BJ (cell line): ENCODE measurements at regions of chr1 and their contacts with region 1.

Region 1: DNA sequence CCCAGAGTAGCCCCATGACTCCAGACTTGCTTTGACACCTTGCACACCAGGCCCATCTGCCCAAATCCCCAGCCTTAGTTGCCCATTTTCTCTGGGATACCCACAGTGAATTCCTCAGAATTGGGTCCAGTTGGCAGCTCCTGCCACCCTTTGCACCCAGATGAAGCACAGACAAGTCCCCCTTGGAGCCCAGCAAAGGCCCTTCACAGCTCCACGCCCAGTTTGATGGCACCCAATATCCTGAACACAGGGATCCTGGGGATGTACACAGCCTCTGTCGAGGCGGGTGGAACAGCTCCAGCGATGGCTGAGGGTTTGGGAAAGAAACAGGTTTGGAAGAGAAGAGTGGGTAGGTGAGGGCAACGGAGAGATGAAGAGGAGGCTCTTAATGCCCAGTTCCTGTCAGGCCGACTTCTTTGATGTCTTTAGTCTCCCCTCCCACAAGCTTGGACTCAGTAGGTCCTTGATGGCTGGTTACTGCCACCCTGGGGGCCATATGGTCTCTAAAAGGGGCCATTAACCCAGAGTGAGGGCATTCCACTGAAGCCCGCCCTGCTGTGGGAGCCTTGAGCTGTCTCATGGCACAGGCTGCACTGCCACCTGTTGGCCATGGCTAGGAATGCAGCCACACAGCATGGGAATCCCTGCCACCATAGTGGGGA is 21.7 kb downstream of the TMEM53 start:
- DNase-seq: no peak
- H3K4me3 ChIP-seq: no peak overlapping the region
- H3K27me3 ChIP-seq: no peaks in the 10 kb centered on the region
- CTCF ChIP-seq: peak; percentile 98

Region 2: DNA sequence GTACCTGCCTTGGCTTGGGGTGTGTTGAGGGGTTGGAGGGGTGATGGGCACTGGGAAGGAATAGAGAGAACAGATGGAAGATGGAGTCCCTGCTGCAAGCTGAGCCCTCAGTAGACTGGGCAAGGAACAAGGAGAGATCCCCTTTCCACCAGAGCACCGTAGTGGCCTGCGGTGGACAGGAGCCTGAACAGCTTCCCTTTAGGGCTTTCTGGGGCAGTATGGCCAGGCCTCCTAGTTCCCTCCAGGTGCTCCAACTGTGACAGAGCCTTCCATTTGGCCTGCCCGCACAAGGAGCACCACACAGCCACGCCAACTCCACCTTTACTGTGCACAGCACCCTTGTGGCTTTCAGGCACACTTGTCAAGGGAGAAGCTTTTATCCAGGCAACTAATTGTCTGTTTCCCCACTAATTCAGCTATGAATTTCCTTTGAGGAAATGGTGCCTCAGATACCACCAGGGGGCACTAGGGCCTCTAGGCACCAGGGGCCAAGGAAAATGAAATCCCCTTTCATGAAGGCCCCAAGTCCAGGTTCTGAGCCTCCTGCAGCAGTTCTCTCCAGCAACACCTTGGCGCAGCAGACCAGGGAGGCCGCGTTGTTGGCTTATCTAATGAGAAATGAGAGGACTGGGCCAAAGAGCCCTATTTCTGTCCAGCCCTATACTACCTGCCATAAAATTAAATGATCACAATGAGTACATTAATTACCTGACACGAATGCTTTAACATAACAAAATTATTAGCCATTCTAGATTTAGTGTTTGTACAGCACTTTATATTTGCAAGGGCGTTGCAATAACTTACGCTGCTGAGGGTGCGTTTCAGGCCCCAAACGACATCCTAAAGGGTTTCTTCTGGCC is 274.4 kb before region 1 on chr1:
- CTCF ChIA-PET with region 1: interaction called, 24 read pairs
- POLR2A ChIA-PET with region 1: no interaction called
- DNase-seq: no peak
- H3K4me3 ChIP-seq: no peak overlapping the region
- H3K27me3 ChIP-seq: peaks cover 13% of the 10 kb centered on the region
- CTCF ChIP-seq: peak; percentile 75

Region 3: DNA sequence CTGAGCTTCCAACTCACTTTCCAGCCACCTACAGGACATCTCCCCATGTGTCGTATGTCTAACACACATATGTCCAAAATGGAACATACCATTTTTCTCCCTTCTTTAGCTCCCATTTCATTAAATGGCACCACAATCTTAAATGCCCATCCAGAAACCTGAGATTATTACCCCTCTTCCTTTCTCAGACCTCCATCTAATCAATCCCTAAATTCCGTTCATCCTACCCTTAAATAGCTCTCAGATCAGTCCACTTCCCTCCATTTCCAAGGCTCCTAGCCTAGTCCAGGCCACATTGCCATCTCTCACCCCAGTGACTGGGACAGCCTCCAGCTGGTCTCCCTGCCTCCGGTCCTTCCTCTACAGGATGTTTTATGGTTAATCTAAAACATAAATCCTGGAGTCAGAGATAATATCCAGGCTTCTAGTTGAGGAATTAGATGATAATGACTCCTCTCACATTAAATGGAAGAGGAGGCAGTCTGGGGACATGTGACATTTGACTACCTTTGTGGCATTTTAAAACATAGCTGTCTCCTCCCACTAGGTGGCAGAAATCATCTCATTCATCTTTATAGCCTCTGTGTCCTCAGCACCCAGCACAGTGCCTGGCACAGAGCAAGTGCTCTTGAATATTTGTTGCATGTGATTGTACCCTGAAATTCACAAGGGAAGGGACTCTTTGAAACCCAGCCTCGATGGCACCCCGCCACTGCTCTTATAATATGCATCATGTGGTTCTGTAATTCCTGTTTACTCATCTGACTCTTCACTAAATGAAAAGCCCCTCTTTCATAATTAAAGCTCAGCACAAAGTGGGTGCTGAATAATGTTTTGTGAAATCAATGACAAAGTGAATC is 80.6 kb before region 1 on chr1:
- CTCF ChIA-PET with region 1: interaction called, 23 read pairs
- POLR2A ChIA-PET with region 1: no interaction called
- DNase-seq: no peak
- H3K4me3 ChIP-seq: no peak overlapping the region
- H3K27me3 ChIP-seq: peaks cover 13% of the 10 kb centered on the region
- CTCF ChIP-seq: peak; percentile 38

Region 4: DNA sequence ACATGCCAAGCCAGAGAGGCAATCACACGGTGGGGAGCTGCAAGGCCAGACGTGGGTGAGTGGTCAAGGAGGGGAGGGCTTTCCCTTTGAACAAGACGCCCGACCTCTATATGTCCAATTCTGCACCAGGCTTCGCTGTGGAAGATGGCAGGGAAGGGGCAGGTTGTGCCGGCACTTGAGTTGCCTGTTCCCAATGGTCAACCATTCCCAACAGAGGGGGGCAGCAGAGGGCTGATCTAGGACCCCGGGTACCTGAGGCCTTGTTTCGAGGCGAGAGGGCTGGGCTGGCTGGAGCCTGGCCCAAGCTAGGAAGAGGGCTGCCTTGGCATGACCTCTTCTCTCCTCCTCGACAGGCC is 43.2 kb before region 1 on chr1:
- CTCF ChIA-PET with region 1: interaction called, 424 read pairs
- POLR2A ChIA-PET with region 1: no interaction called
- DNase-seq: no peak
- H3K4me3 ChIP-seq: no peak overlapping the region
- H3K27me3 ChIP-seq: peaks cover 3% of the 10 kb centered on the region; the same call in 1 of the 2 replicates
- CTCF ChIP-seq: peak; percentile 81

Region 5: GRCh38 chr1:44616991-44617702 is 35.4 kb before region 1 on chr1:
- CTCF ChIA-PET with region 1: interaction called, 424 read pairs
- POLR2A ChIA-PET with region 1: no interaction called
- DNase-seq: no peak
- H3K4me3 ChIP-seq: peak overlapping the region; percentile 38
- H3K27me3 ChIP-seq: no peaks in the 10 kb centered on the region
- CTCF ChIP-seq: no peak

Region 6: DNA sequence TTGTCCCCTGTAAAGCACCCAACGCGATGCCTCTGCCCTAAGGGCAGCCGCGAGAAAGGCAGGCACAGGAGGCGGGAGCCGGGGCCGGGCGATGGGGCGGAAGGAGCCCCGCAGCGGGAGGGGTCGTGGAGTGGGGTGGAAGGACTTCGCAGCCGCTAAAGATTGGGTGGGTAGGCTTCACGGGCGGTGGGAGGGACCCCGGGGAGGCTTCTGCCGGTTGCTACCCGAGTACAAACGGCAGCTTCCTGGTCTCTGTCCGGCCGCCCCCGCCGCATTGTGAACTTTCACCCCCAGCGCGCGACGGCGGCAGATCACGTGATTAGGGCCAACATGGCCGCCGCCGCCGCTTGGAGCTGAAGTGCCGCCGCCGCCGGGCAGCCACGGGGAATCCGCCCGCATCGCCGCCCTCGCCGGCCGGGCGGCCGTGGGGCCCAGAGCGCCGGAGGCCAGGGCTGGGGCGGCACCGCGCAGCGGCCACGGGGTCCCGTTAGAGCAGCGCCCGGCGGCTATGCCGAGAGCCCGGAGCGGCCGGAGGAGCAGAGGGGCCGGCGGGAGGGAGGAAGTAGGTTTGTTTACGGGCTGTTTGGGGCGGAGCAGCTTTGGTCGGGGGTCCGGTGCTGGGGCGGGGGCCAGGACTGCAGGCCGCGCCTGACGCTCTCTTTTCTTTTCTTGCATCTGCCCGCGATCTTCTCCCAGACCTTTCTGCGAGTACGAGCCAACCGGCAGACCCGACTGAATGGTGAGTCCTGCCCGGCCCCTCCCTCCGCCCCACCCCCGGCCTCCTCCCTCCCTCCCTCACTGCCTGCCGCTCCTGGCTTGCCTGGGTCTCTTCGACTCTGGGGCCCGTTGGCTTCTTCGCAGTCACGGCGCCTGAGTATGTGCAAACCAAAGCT is 20.7 kb before region 1 on chr1:
- CTCF ChIA-PET with region 1: interaction called, 192 read pairs
- POLR2A ChIA-PET with region 1: no interaction called
- DNase-seq: no peak
- H3K4me3 ChIP-seq: peak overlapping the region; percentile 67
- H3K27me3 ChIP-seq: no peaks in the 10 kb centered on the region
- CTCF ChIP-seq: no peak

Region 7: GRCh38 chr1:44674113-44675000 is 21.8 kb after region 1 on chr1 and contains the starts of genes ARMH1 and TMEM53:
- CTCF ChIA-PET with region 1: interaction called, 25 read pairs
- POLR2A ChIA-PET with region 1: no interaction called
- DNase-seq: peak; percentile 91
- H3K4me3 ChIP-seq: peak within 1 kb of the TSS; percentile 65
- H3K27me3 ChIP-seq: no peaks in the 10 kb centered on the region
- CTCF ChIP-seq: no peak
- polyA plus RNA-seq, gene ARMH1: 0.71 and 0.86 TPM in 2 replicates
- polyA plus RNA-seq, gene TMEM53: 7.9 and 12.1 TPM in 2 replicates